KBM-7 (cell line): ENCODE measurements at regions of chr5 and their contacts with region 1.

Region 1: GRCh38 chr5:59218424-59219045 is 635.7 kb downstream of the RAB3C start:
- DNase-seq: peak; percentile 31

Region 2: DNA sequence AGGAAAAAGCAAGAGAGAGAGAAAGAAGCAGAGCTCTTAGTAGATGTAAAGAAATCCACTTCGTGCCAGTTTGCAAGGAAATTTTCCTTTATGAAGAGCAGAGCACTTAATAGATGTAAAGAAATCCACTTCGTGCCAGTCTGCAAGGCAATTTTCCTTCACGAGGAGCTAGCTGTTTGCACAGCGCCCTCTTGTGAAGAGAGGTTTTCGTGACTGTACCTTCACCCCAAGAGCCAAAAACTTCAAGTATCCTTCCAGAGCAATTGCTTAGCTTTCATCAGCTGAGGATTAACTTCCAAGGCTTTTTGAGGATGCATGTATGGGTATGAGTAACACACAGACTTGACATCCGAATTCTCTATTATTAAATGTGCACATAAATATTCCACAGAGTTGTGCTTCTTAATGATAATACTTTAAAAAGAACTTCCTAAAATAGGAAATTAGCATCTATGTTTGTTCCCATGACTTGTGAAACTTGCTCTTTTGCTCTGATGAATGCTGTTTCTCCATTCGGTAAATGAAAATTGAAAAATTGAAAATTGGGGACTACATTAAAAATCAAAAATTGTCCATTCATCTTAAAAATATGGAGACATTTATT is 149.4 kb after region 1 on chr5:
- in situ Hi-C with region 1: loop called (anchors 25 kb)
- DNase-seq: peak; percentile 80